Natural killer cell (primary cell): ENCODE measurements at regions of chr3 and their contacts with region 1.

Region 1: GRCh38 chr3:186783073-186783730 is at the start of gene EIF4A2:
- DNase-seq: peak; percentile 89 to 96
- ATAC-seq: peak; percentile 71 to 85 (median 77)
- H3K4me3 ChIP-seq: peak within 1 kb of the TSS; percentile 79
- H3K4me3 Mint-ChIP-seq: peak within 1 kb of the TSS; percentile 96
- H3K27ac ChIP-seq: peak within 1 kb of the TSS; percentile 93
- H3K27ac Mint-ChIP-seq: peak within 1 kb of the TSS; percentile 95 to 97
- H3K4me1 ChIP-seq: peaks cover 19% of the 10 kb centered on the region
- H3K4me1 Mint-ChIP-seq: peaks cover 57% of the 10 kb centered on the region in 2 donors
- H3K27me3 ChIP-seq: no peaks in the 10 kb centered on the region
- H3K27me3 Mint-ChIP-seq: no peaks in the 10 kb centered on the region
- CTCF ChIP-seq: no peak
- total RNA-seq, gene EIF4A2: 551 to 652 (median 621) TPM

Region 2: GRCh38 chr3:187130346-187131066 is 347.3 kb after region 1 on chr3:
- intact Hi-C with region 1: loop called (anchors 5 kb)
- DNase-seq: peak in 1 of 2 donors; percentile 88
- ATAC-seq: peak; percentile 89 to 97 (median 96)
- H3K4me3 ChIP-seq: no peak overlapping the region
- H3K4me3 Mint-ChIP-seq: peak overlapping the region; percentile 71
- H3K27ac ChIP-seq: peak overlapping the region; percentile 93
- H3K27ac Mint-ChIP-seq: peak overlapping the region; percentile 99
- H3K4me1 ChIP-seq: peaks cover 13% of the 10 kb centered on the region
- H3K4me1 Mint-ChIP-seq: peaks cover 47 to 50% of the 10 kb centered on the region in 2 donors
- H3K27me3 ChIP-seq: no peaks in the 10 kb centered on the region
- H3K27me3 Mint-ChIP-seq: no peaks in the 10 kb centered on the region
- CTCF ChIP-seq: no peak